CD8-positive, alpha-beta T cell (primary cell): ENCODE measurements at regions of chr16 and their contacts with region 1.

Region 1: DNA sequence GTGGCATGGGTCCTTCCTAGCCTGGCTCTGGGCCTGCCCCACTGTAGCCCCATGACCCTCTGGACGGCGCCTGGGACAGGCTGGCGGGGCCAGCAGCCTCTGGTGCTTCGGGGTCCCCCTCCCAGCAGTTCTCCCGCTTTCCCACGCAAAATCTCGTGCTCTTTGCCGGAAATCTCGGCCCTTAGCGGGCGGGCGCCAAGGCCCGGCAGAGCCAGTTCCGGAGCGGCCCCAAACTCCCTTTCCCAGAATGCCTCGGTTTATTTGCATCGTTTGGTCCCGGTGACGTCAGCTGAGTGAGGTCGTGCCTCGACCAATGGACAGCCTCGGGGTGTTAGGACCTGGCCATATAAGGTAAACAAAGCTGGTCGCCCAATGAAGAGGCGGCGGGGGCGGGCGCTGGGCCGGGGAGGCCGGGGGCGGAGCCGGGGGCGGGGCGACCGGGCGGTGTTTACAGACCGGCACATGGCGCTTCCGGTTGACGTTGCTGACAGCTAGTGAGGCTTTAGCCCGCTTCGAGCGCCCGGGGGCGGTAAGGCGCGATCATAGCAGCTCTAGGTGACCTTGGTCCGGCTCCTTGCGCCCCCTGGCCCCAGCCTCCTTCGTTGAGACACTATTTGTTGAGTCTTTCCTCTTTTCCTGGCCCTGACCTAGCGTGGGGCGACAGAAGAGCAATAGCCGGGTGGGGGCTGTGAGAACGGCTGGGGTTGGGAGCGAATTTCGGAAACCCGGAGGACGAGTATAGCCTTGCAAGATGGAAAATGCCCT is 1.5 kb upstream of the UBALD1 start:
- DNase-seq: peak; percentile 96 to 100 (median 98)
- ATAC-seq: peak; percentile 90
- H3K4me3 ChIP-seq: peak overlapping the region; percentile 67 to 97
- H3K4me3 Mint-ChIP-seq: peak overlapping the region; percentile 96
- H3K27ac ChIP-seq: peak overlapping the region; percentile 96 to 98
- H3K27ac Mint-ChIP-seq: peak overlapping the region; percentile 99
- H3K4me1 ChIP-seq: peaks cover 49% of the 10 kb centered on the region
- H3K4me1 Mint-ChIP-seq: peaks cover 41% of the 10 kb centered on the region
- H3K27me3 ChIP-seq: no peaks in the 10 kb centered on the region
- H3K27me3 Mint-ChIP-seq: no peaks in the 10 kb centered on the region
- CTCF ChIP-seq: no peak

Region 2: GRCh38 chr16:3611146-3611975 is 1004.9 kb before region 1 on chr16 and contains the start of gene SLX4:
- CTCF ChIA-PET with region 1: no interaction called
- POLR2A ChIA-PET with region 1: no interaction called
- intact Hi-C with region 1: loop called in 1 of 2 experiments (anchors 5 kb)
- DNase-seq: peak; percentile 79 to 98 (median 91)
- ATAC-seq: peak; percentile 87
- H3K4me3 ChIP-seq: peak within 1 kb of the TSS; percentile 80 to 96
- H3K4me3 Mint-ChIP-seq: peak within 1 kb of the TSS; percentile 99
- H3K27ac ChIP-seq: peak within 1 kb of the TSS; percentile 78 to 89
- H3K27ac Mint-ChIP-seq: peak within 1 kb of the TSS; percentile 99
- H3K4me1 ChIP-seq: peaks cover 26% of the 10 kb centered on the region
- H3K4me1 Mint-ChIP-seq: peaks cover 49% of the 10 kb centered on the region
- H3K27me3 ChIP-seq: no peaks in the 10 kb centered on the region
- H3K27me3 Mint-ChIP-seq: no peaks in the 10 kb centered on the region
- CTCF ChIP-seq: no peak
- total RNA-seq, gene SLX4: 5.1 to 5.2 TPM

Region 3: GRCh38 chr16:4271176-4272066 is 344.8 kb before region 1 on chr16:
- CTCF ChIA-PET with region 1: no interaction called
- POLR2A ChIA-PET with region 1: no interaction called
- intact Hi-C with region 1: loop called (anchors 5 to 10 kb)
- DNase-seq: peak; percentile 72 to 93 (median 89)
- ATAC-seq: peak; percentile 84
- H3K4me3 ChIP-seq: peak overlapping the region; percentile 91 to 99
- H3K4me3 Mint-ChIP-seq: peak overlapping the region; percentile 88
- H3K27ac ChIP-seq: peak overlapping the region; percentile 50 to 76
- H3K27ac Mint-ChIP-seq: peak overlapping the region; percentile 57
- H3K4me1 ChIP-seq: peaks cover 13% of the 10 kb centered on the region
- H3K4me1 Mint-ChIP-seq: peaks cover 15% of the 10 kb centered on the region
- H3K27me3 ChIP-seq: no peaks in the 10 kb centered on the region
- H3K27me3 Mint-ChIP-seq: no peaks in the 10 kb centered on the region
- CTCF ChIP-seq: no peak

Region 4: GRCh38 chr16:4425378-4426020 is 190.7 kb before region 1 on chr16 and contains the start of gene DNAJA3:
- CTCF ChIA-PET with region 1: no interaction called
- POLR2A ChIA-PET with region 1: no interaction called
- intact Hi-C with region 1: loop called (anchors 1 to 2 kb)
- DNase-seq: peak; percentile 80 to 97 (median 92)
- ATAC-seq: peak; percentile 84
- H3K4me3 ChIP-seq: peak within 1 kb of the TSS; percentile 83 to 100
- H3K4me3 Mint-ChIP-seq: peak within 1 kb of the TSS; percentile 96
- H3K27ac ChIP-seq: peak within 1 kb of the TSS; percentile 96 to 100
- H3K27ac Mint-ChIP-seq: peak within 1 kb of the TSS; percentile 99
- H3K4me1 ChIP-seq: peaks cover 23% of the 10 kb centered on the region
- H3K4me1 Mint-ChIP-seq: peaks cover 32% of the 10 kb centered on the region
- H3K27me3 ChIP-seq: no peaks in the 10 kb centered on the region
- H3K27me3 Mint-ChIP-seq: no peaks in the 10 kb centered on the region
- CTCF ChIP-seq: no peak
- total RNA-seq, gene DNAJA3: 13.8 to 17.4 TPM

Region 5: DNA sequence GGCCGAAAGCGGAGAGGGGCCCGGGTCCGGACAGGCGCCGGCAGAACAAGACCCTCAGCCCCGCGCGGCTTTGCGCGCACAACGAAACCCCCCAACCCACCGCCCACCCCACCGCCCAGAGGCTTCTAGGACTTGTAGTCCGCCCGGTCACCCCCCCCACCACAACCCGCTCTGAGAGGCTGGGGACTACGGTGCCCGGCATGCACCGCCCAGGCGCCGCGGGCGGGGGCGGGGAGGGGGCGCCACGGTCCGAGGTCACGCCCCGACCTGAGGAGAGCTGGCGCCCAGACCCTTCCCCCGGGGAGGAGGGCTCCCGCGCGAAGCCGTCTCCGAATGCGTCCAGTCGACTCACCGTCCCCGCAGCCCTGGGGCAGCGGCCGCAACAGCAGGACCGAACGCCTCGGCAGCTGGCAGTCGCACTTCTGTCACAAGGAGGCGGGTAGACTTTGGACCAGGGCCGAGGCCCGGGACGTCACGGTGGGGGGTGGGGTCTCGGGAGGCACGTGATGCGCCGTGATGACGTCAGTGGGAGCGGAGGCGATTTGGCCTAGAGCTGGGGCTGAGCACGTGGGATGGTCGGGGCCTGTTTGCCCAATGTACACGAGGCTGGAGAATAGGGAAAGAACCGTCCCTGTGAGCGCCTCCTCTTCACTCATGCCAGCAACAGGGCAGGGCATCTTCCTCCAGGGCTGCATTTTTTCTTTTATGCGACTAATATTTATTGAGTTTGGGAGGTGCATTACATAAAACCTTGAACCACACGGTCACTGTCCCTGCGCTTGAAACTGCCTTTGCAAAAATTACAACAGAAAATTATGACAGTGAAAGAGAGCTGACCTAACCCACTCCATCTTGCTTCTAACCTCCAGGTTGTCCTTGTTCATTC is 77.6 kb before region 1 on chr16 and contains the start of gene CDIP1:
- CTCF ChIA-PET with region 1: no interaction called
- POLR2A ChIA-PET with region 1: no interaction called
- intact Hi-C with region 1: loop called (anchors 1 kb)
- DNase-seq: peak; percentile 88 to 98 (median 94)
- ATAC-seq: peak; percentile 86
- H3K4me3 ChIP-seq: peak within 1 kb of the TSS; percentile 71
- H3K4me3 Mint-ChIP-seq: peak within 1 kb of the TSS; percentile 80
- H3K27ac ChIP-seq: peak within 1 kb of the TSS; percentile 86 to 90
- H3K27ac Mint-ChIP-seq: peak within 1 kb of the TSS; percentile 92
- H3K4me1 ChIP-seq: peaks cover 45% of the 10 kb centered on the region
- H3K4me1 Mint-ChIP-seq: peaks cover 39% of the 10 kb centered on the region
- H3K27me3 ChIP-seq: no peaks in the 10 kb centered on the region
- H3K27me3 Mint-ChIP-seq: no peaks in the 10 kb centered on the region
- CTCF ChIP-seq: no peak
- total RNA-seq, gene CDIP1: 21.7 to 25.0 TPM

Region 6: GRCh38 chr16:4766874-4767628 is 150.8 kb after region 1 on chr16 and contains the start of gene ZNF500:
- CTCF ChIA-PET with region 1: interaction called, 3 read pairs
- POLR2A ChIA-PET with region 1: interaction called, 5 read pairs
- intact Hi-C with region 1: loop called in 1 of 2 experiments (anchors 1 kb)
- DNase-seq: peak; percentile 89 to 98 (median 96)
- ATAC-seq: peak; percentile 90
- H3K4me3 ChIP-seq: peak within 1 kb of the TSS; percentile 77 to 83
- H3K4me3 Mint-ChIP-seq: peak within 1 kb of the TSS; percentile 91
- H3K27ac ChIP-seq: peak within 1 kb of the TSS; percentile 67 to 77
- H3K27ac Mint-ChIP-seq: peak within 1 kb of the TSS; percentile 81
- H3K4me1 ChIP-seq: peaks cover 22% of the 10 kb centered on the region
- H3K4me1 Mint-ChIP-seq: peaks cover 45% of the 10 kb centered on the region
- H3K27me3 ChIP-seq: no peaks in the 10 kb centered on the region
- H3K27me3 Mint-ChIP-seq: no peaks in the 10 kb centered on the region
- CTCF ChIP-seq: no peak
- total RNA-seq, gene ZNF500: 12.1 to 15.9 TPM

Region 7: GRCh38 chr16:4957720-4958509 is 341.7 kb after region 1 on chr16 and contains the start of gene SEC14L5:
- CTCF ChIA-PET with region 1: interaction called, 3 read pairs
- POLR2A ChIA-PET with region 1: no interaction called
- intact Hi-C with region 1: loop called in 1 of 2 experiments (anchors 2 kb)
- DNase-seq: peak; percentile 72 to 92 (median 87)
- ATAC-seq: peak; percentile 98
- H3K4me3 ChIP-seq: peak within 1 kb of the TSS; percentile 40 to 70
- H3K4me3 Mint-ChIP-seq: peak within 1 kb of the TSS; percentile 82
- H3K27ac ChIP-seq: no peak within 1 kb of the TSS
- H3K27ac Mint-ChIP-seq: no peak within 1 kb of the TSS
- H3K4me1 ChIP-seq: peaks cover 15% of the 10 kb centered on the region
- H3K4me1 Mint-ChIP-seq: peaks cover 20% of the 10 kb centered on the region
- H3K27me3 ChIP-seq: peaks cover 6 to 22% of the 10 kb centered on the region in 2 experiments
- H3K27me3 Mint-ChIP-seq: peaks cover 55% of the 10 kb centered on the region
- CTCF ChIP-seq: no peak
- total RNA-seq, gene SEC14L5: not detected

Region 8: DNA sequence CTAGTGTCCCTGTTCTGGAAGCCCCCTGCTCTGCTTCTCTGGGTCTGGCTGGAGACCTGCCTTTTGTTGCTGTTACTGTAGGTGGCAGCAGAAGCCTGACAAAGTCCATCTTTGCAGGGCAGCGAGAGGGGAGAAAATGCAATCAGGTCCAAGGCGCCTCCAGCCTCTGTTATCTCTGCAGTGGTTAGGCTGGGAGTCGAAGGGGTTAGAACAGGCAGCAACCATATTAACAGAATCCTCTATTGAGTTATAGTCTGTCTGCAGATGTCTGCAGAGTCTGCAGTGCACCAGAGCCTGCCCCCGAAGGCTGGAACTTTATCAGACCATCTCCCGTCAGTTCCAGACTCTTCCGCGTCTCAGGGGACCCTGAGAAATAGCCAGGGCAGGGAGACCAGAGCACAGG is 886.2 kb after region 1 on chr16:
- CTCF ChIA-PET with region 1: no interaction called
- POLR2A ChIA-PET with region 1: no interaction called
- intact Hi-C with region 1: no loop called
- DNase-seq: no peak
- ATAC-seq: no peak
- H3K4me3 ChIP-seq: no peak overlapping the region
- H3K4me3 Mint-ChIP-seq: no peak overlapping the region
- H3K27ac ChIP-seq: no peak overlapping the region
- H3K27ac Mint-ChIP-seq: no peak overlapping the region
- H3K4me1 ChIP-seq: no peaks in the 10 kb centered on the region
- H3K4me1 Mint-ChIP-seq: no peaks in the 10 kb centered on the region
- H3K27me3 ChIP-seq: no peaks in the 10 kb centered on the region
- H3K27me3 Mint-ChIP-seq: peaks cover 12% of the 10 kb centered on the region
- CTCF ChIP-seq: no peak